OCI-LY7 (cell line): ENCODE measurements at regions of chr9 and their contacts with region 1.

Region 1: DNA sequence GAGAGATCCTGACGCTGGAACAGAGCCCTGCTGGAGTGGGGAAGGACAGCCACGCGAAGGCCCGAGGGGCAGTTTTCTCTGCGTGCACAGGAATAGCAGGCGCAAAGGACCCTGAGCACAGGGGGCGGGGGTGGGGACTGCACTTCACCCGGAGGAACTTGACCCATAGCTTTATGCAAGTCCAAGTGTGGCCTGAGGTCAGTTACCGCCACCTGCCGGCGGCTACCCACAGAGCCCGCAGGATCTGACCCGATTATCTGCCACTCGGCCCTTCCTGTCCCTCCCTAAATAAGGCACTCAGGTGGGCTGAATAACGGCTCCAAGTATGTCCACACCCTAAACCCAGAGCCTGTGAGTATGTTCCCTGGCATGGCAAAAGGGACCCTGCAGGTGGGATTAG is 65.4 kb upstream of the FCN1 start:
- DNase-seq: peak; percentile 63
- H3K4me3 ChIP-seq: no peak overlapping the region
- H3K27ac ChIP-seq: no peak overlapping the region
- H3K4me1 ChIP-seq: peaks cover 6% of the 10 kb centered on the region
- CTCF ChIP-seq: peak; percentile 86

Region 2: DNA sequence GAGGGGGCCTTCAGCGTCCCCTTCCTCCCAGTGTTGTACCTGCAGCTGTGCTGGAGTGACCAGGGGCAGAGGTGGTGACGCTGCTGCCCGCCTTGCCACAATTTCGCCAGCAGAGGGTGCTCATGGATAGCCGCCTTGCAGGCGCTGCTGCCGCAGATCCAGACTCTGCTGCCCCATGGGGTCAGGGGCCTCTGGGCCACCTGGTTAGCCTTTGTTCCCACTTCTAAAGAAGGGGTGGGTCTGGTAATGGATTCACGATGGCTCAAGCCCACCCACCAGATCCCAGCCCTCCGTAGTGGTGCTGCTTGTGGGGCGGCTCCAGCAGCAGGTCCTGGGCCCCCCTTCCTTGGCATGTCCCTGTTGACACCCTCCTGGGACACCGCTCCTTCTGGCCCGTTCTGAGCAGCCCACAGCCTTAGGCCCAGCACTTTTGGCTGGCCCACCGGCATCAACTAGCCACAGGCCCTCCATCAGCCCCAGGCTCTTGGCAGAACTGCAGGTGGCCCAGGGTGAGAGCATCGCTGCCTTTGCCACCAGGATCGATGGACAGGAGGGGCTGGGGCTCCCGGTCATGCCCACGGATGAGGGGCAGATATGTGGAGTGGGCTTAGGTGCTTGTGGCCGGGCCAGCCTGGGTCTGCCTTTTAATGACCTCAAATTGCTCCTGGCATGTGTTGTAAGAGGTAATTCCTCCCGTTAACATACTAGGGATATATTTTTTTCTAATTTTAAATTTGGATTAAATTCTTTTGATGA is 284.3 kb before region 1 on chr9:
- CTCF ChIA-PET with region 1: interaction called, 3 read pairs
- POLR2A ChIA-PET with region 1: no interaction called
- intact Hi-C with region 1: loop called (anchors 1 kb)
- DNase-seq: peak; percentile 60
- H3K4me3 ChIP-seq: no peak overlapping the region
- H3K27ac ChIP-seq: no peak overlapping the region
- H3K4me1 ChIP-seq: no peaks in the 10 kb centered on the region
- CTCF ChIP-seq: peak; percentile 89

Region 3: GRCh38 chr9:134778841-134779411 is 204.1 kb before region 1 on chr9:
- CTCF ChIA-PET with region 1: no interaction called
- POLR2A ChIA-PET with region 1: no interaction called
- intact Hi-C with region 1: loop called (anchors 1 kb)
- DNase-seq: peak; percentile 62
- H3K4me3 ChIP-seq: no peak overlapping the region
- H3K27ac ChIP-seq: no peak overlapping the region
- H3K4me1 ChIP-seq: peaks cover 17% of the 10 kb centered on the region
- CTCF ChIP-seq: peak; percentile 79

Region 4: DNA sequence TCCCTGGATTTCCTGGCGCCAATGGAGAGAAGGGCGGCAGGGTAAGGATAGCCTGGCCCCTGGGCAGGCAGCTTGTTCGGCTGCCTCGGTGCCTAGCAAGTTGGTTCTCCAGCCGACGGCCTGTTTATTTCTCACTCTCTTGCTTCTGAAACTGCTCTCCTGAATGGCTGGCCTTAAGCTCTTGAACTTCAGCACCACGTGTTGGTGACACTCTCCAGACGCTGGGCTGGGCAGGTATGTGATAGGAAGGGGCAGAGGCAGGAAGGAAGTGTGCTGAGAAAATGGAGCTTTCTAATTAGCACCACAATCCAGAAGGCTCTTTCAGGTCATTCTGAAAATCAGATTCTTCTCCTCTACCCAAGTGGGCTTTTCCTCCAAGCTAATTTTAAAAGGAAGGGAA is 193.9 kb before region 1 on chr9:
- CTCF ChIA-PET with region 1: interaction called, 13 read pairs
- POLR2A ChIA-PET with region 1: no interaction called
- intact Hi-C with region 1: no loop called
- DNase-seq: no peak
- H3K4me3 ChIP-seq: no peak overlapping the region
- H3K27ac ChIP-seq: no peak overlapping the region
- H3K4me1 ChIP-seq: no peaks in the 10 kb centered on the region
- CTCF ChIP-seq: no peak

Region 5: GRCh38 chr9:134929193-134930158 is 53.6 kb before region 1 on chr9:
- CTCF ChIA-PET with region 1: no interaction called
- POLR2A ChIA-PET with region 1: interaction called, 13 read pairs
- intact Hi-C with region 1: no loop called
- DNase-seq: peak; percentile 68
- H3K4me3 ChIP-seq: peak overlapping the region; percentile 31
- H3K27ac ChIP-seq: peak overlapping the region; percentile 97
- H3K4me1 ChIP-seq: peaks cover 63% of the 10 kb centered on the region
- CTCF ChIP-seq: no peak

Region 6: GRCh38 chr9:135085830-135086546 is 102.9 kb after region 1 on chr9:
- CTCF ChIA-PET with region 1: no interaction called
- POLR2A ChIA-PET with region 1: no interaction called
- intact Hi-C with region 1: no loop called
- DNase-seq: peak; percentile 26
- H3K4me3 ChIP-seq: no peak overlapping the region
- H3K27ac ChIP-seq: no peak overlapping the region
- H3K4me1 ChIP-seq: no peaks in the 10 kb centered on the region
- CTCF ChIP-seq: peak; percentile 82

Region 7: DNA sequence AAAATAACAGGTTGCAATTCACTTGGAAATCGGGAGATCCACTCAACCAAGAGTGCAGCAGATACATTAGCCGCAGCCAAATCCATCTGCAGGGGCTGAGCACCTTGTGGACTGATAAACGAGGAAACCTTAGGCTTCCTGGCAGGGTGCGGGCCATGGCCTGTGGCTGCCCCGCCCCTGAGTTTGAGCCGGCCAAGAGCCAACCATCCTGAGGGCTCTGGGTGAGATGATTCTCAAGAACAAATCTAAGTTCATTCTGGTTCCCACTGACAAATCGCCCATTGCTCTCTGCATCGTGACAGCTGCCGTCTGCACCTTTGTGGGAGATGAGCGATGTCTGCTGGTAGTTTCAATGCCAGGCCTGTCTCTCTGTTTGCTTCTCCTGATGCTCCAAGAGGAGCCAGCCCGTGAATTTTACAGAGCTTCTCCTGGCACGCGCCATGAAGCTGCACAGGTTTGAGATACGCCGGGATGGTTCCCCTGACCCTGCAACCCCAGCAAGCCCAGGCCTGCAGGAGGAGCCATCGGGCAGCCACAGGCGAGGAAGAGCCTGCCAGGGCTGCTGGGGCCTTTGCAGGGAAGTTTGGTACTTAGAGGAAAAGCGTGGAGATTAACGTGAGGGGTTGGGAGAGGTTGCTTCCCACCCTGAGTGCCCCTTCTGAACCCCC is 258.4 kb after region 1 on chr9:
- CTCF ChIA-PET with region 1: no interaction called
- POLR2A ChIA-PET with region 1: no interaction called
- intact Hi-C with region 1: no loop called
- DNase-seq: no peak
- H3K4me3 ChIP-seq: no peak overlapping the region
- H3K27ac ChIP-seq: no peak overlapping the region
- H3K4me1 ChIP-seq: no peaks in the 10 kb centered on the region
- CTCF ChIP-seq: no peak

Region 8: GRCh38 chr9:135294826-135295225 is 311.8 kb after region 1 on chr9:
- CTCF ChIA-PET with region 1: no interaction called
- POLR2A ChIA-PET with region 1: no interaction called
- intact Hi-C with region 1: no loop called
- DNase-seq: no peak
- H3K4me3 ChIP-seq: no peak overlapping the region
- H3K27ac ChIP-seq: no peak overlapping the region
- H3K4me1 ChIP-seq: no peaks in the 10 kb centered on the region
- CTCF ChIP-seq: no peak